Lower leg skin (tissue), 4 donors: ENCODE measurements at regions of chr14 and their contacts with region 1.

Region 1: DNA sequence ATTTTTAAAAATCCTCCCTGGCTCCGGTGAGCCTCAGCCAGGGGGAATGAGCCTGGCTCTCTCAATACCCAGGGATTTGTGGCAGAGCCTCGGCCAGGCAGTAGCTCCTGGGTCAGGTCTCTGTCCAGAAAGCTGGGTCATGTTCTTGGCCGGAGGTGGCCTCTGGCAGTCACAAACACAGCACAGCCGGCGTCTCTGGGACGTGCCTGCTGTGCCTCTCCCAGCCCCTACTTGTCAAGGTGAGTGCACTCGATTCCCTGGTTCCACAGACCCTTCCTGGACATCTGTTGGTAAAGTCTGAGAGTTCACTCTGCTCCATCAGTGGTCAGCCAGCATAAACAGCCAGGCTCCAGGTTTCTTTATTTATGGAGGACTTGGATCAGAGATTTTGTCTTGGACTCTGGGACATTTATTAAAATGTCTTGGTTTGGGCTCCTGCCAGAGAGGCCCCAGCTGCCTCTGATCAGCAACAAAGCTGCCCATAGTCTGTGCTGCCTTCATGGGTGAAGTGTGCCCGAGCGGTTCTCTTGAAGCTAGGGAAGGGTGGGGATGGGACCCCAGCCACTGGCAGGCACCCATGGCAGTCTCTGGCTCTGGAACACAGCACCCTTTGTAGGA is 56.7 kb downstream of the DGLUCY start:
- DNase-seq: no peak
- H3K4me3 ChIP-seq: no peak overlapping the region
- CTCF ChIP-seq: no peak
- POLR2A ChIP-seq: no peak

Region 2: GRCh38 chr14:90903101-90903500 is 267.5 kb before region 1 on chr14:
- intact Hi-C with region 1: loop called (anchors 1 kb)
- DNase-seq: peak in 1 of 2 donors; percentile 47
- H3K4me3 ChIP-seq: no peak overlapping the region
- CTCF ChIP-seq: peak in 1 of 3 donors; percentile 65
- POLR2A ChIP-seq: no peak